ENCODE measurements at regions of chr6 and their contacts with region 1.

Region 1: GRCh38 chr6:36423101-36423824 is 19.4 kb downstream of the PXT1 start:
- H3K4me3 Mint-ChIP-seq: peak overlapping the region; percentile 80
- H3K27ac Mint-ChIP-seq: peak overlapping the region; percentile 78
- H3K4me1 Mint-ChIP-seq: peaks cover 28% of the 10 kb centered on the region
- H3K27me3 Mint-ChIP-seq: no peaks in the 10 kb centered on the region

Region 2: DNA sequence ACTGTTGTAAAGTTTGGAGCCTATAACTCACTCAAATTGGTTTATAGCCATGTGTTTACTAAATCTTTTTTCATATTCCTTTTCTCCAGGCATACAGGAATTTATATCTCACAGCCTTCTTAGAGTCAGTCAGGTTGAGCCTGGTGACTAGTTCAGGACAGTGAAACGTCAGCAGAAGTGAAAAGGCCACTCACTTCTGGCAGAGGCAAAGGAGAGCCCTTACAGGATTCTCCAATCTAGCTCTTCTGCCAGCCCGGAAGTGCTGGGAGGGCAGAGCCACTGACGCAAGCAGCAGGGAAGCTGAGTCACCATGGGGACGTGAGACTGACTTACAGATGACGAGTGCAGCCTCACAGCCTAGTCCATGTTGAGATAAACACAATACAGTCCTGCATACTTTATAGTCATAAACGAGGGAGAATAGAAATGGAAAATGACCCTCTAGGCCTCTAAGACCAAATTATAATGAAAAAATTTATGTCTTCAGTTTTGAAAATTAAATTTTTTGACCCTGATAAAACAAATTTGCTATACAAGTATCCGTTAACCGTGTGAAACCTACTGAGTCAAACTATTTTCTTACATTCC is 18.1 kb after region 1 on chr6:
- intact Hi-C with region 1: loop called (anchors 1 kb)
- H3K4me3 Mint-ChIP-seq: no peak overlapping the region
- H3K27ac Mint-ChIP-seq: peak overlapping the region; percentile 96
- H3K4me1 Mint-ChIP-seq: peaks cover 26% of the 10 kb centered on the region
- H3K27me3 Mint-ChIP-seq: no peaks in the 10 kb centered on the region

Region 3: GRCh38 chr6:36493859-36494258 is 70.6 kb after region 1 on chr6:
- intact Hi-C with region 1: loop called (anchors 10 kb)
- H3K4me3 Mint-ChIP-seq: no peak overlapping the region
- H3K27ac Mint-ChIP-seq: peak overlapping the region; percentile 60
- H3K4me1 Mint-ChIP-seq: peaks cover 45% of the 10 kb centered on the region
- H3K27me3 Mint-ChIP-seq: no peaks in the 10 kb centered on the region

Region 4: DNA sequence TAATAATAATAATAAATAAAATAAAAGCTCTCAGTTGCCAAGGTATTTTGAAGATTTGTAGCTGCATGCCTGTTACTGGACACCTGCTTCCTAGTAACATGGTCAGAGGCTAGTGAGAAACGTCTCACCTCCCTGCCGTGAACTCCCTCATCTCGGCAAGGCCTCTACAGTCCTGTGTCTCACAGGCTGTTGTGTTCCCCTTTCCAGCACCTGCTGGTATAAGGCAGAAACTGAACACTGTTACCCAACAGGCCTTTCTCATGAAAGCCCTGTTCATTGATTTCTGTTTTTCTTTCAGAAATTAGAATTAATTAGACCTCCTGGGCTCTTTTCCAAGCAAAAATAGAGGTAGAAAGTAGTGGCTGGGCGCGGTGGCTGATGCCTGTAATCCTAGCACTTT is 153.3 kb after region 1 on chr6:
- intact Hi-C with region 1: loop called (anchors 5 kb)
- H3K4me3 Mint-ChIP-seq: no peak overlapping the region
- H3K27ac Mint-ChIP-seq: peak overlapping the region; percentile 71
- H3K4me1 Mint-ChIP-seq: peaks cover 44% of the 10 kb centered on the region
- H3K27me3 Mint-ChIP-seq: no peaks in the 10 kb centered on the region

Region 5: GRCh38 chr6:36594029-36594815 is 171.0 kb after region 1 on chr6 and contains the start of gene SRSF3:
- intact Hi-C with region 1: loop called (anchors 5 kb)
- H3K4me3 Mint-ChIP-seq: peak within 1 kb of the TSS; percentile 84
- H3K27ac Mint-ChIP-seq: peak within 1 kb of the TSS; percentile 96
- H3K4me1 Mint-ChIP-seq: peaks cover 36% of the 10 kb centered on the region
- H3K27me3 Mint-ChIP-seq: no peaks in the 10 kb centered on the region